AG04449 (cell line): ENCODE measurements at regions of chr5 and their contacts with region 1.

Region 1: GRCh38 chr5:138223532-138223931 is 10.4 kb upstream of the CDC23 start:
- DNase-seq: no peak
- H3K4me3 ChIP-seq: no peak overlapping the region
- CTCF ChIP-seq: no peak

Region 2: DNA sequence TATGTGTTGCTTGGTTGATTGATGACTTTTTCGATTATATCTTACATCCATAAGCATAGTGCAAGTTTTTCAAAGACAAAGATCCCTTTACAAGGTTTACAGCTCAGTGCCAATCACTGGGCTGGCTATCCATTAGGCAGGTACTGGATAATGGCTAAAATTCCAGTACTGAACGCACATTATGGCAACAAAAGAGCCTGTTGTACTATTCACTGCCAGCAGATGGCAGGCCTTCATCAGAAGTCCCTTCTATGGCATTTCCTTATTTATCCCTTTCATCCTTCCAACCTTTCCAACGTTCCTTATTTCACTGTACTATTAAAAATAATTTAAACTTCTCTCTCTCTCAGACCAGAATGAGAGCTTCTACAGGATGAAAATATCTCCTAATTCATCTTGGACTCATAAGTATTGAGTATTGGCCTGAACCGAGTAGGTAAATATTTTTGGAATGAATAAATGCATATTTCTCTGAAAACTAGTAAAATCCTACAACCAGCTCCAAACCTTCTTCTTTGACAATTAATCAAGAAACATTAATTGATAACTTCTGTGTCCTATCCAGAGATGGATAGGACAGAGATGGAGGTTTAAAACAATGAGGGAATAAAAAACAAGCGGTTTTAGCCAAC is 146.4 kb before region 1 on chr5:
- CTCF ChIA-PET with region 1: no interaction called
- POLR2A ChIA-PET with region 1: no interaction called
- DNase-seq: peak; percentile 5
- H3K4me3 ChIP-seq: no peak overlapping the region
- CTCF ChIP-seq: peak; percentile 70

Region 3: GRCh38 chr5:138213161-138214029 is 10.1 kb before region 1 on chr5 and contains the start of gene CDC23:
- CTCF ChIA-PET with region 1: interaction called, 45 read pairs
- POLR2A ChIA-PET with region 1: no interaction called
- DNase-seq: peak; percentile 88
- H3K4me3 ChIP-seq: peak within 1 kb of the TSS; percentile 99
- CTCF ChIP-seq: no peak

Region 4: GRCh38 chr5:138241688-138242571 is 18.4 kb after region 1 on chr5:
- CTCF ChIA-PET with region 1: interaction called, 52 read pairs
- POLR2A ChIA-PET with region 1: no interaction called
- DNase-seq: no peak
- H3K4me3 ChIP-seq: peak overlapping the region; percentile 44
- CTCF ChIP-seq: no peak

Region 5: GRCh38 chr5:138274189-138274853 is 50.8 kb after region 1 on chr5 and contains the start of gene GFRA3:
- CTCF ChIA-PET with region 1: interaction called, 18 read pairs
- POLR2A ChIA-PET with region 1: no interaction called
- DNase-seq: no peak
- H3K4me3 ChIP-seq: peak within 1 kb of the TSS; percentile 43
- CTCF ChIP-seq: no peak

Region 6: GRCh38 chr5:138282920-138283742 is 59.6 kb after region 1 on chr5:
- CTCF ChIA-PET with region 1: interaction called, 122 read pairs
- POLR2A ChIA-PET with region 1: no interaction called
- DNase-seq: no peak
- H3K4me3 ChIP-seq: no peak overlapping the region
- CTCF ChIP-seq: peak; percentile 66

Region 7: GRCh38 chr5:138408023-138408422 is 184.5 kb after region 1 on chr5:
- CTCF ChIA-PET with region 1: interaction called, 18 read pairs
- POLR2A ChIA-PET with region 1: no interaction called
- DNase-seq: no peak
- H3K4me3 ChIP-seq: no peak overlapping the region
- CTCF ChIP-seq: no peak